ENCODE measurements at regions of chr21 and their contacts with region 1.

Region 1: GRCh38 chr21:23016405-23017016 is 2018.3 kb downstream of the NCAM2 start:
- DNase-seq: peak; percentile 62
- ATAC-seq: peak; percentile 69
- H3K4me3 ChIP-seq: no peak overlapping the region
- H3K27ac ChIP-seq: peak overlapping the region; percentile 89
- H3K4me1 ChIP-seq: peaks cover 21% of the 10 kb centered on the region
- H3K27me3 ChIP-seq: no peaks in the 10 kb centered on the region
- CTCF ChIP-seq: peak; percentile 79

Region 2: DNA sequence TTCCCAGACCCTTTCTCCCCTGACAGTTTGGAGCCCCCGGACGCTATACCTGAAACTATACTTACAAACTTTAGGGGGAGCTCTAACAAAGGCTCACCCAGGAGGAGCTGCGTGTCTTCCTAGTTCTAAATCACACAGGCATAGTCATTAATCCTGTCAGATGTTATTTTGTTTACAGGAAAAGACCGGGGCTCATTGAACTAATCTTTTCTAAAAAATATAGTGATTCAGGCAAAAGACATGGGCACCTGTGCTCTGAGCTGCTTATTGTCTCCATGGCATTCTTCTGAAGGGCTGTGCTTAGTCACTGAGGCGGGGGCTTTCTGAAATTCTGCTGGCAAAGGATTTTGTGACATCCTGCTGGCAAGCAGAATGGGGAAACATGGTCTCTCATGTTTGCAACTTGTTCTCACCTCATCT is 441.3 kb before region 1 on chr21:
- CTCF ChIA-PET with region 1: interaction called, 4 read pairs
- POLR2A ChIA-PET with region 1: no interaction called
- intact Hi-C with region 1: loop called (anchors 10 kb)
- DNase-seq: peak; percentile 47
- ATAC-seq: peak; percentile 85
- H3K4me3 ChIP-seq: peak overlapping the region; percentile 43
- H3K27ac ChIP-seq: no peak overlapping the region
- H3K4me1 ChIP-seq: no peaks in the 10 kb centered on the region
- H3K27me3 ChIP-seq: no peaks in the 10 kb centered on the region
- CTCF ChIP-seq: peak; percentile 75

Region 3: DNA sequence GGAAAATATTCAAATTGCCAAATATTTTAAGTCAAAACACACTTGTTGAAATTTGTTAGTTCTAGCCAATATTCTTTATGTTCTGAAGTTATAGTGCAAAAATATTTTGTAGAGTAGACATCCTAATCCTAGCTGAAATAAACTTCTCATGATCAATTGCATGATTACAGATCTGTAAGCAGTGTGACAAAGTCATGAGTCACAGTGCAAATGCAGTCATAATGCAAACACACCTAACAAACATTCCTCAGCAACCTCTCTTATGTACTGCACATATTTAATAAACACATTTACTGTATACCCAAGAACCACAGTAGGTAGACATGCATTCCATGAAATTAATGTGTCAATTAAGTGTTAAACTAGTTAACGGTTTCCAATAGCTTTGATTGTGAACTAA is 160.9 kb before region 1 on chr21:
- CTCF ChIA-PET with region 1: no interaction called
- POLR2A ChIA-PET with region 1: no interaction called
- intact Hi-C with region 1: loop called (anchors 5 kb)
- DNase-seq: peak; percentile 92
- ATAC-seq: peak; percentile 100
- H3K4me3 ChIP-seq: no peak overlapping the region
- H3K27ac ChIP-seq: peak overlapping the region; percentile 36
- H3K4me1 ChIP-seq: peaks cover 14% of the 10 kb centered on the region
- H3K27me3 ChIP-seq: no peaks in the 10 kb centered on the region
- CTCF ChIP-seq: no peak

Region 4: GRCh38 chr21:22925032-22925431 is 91.5 kb before region 1 on chr21:
- CTCF ChIA-PET with region 1: no interaction called
- POLR2A ChIA-PET with region 1: no interaction called
- intact Hi-C with region 1: no loop called
- DNase-seq: no peak
- ATAC-seq: 0 out of 2 replicates have a peak, but pooled peaks have one; percentile 22
- H3K4me3 ChIP-seq: no peak overlapping the region
- H3K27ac ChIP-seq: no peak overlapping the region
- H3K4me1 ChIP-seq: no peaks in the 10 kb centered on the region
- H3K27me3 ChIP-seq: no peaks in the 10 kb centered on the region
- CTCF ChIP-seq: no peak

Region 5: GRCh38 chr21:22941791-22942190 is 74.7 kb before region 1 on chr21:
- CTCF ChIA-PET with region 1: no interaction called
- POLR2A ChIA-PET with region 1: no interaction called
- intact Hi-C with region 1: loop called (anchors 5 kb)
- DNase-seq: peak; percentile 65
- ATAC-seq: peak; percentile 94
- H3K4me3 ChIP-seq: peak overlapping the region; percentile 18; the same call in 1 of the 2 replicates
- H3K27ac ChIP-seq: peak overlapping the region; percentile 44
- H3K4me1 ChIP-seq: peaks cover 20% of the 10 kb centered on the region
- H3K27me3 ChIP-seq: no peaks in the 10 kb centered on the region
- CTCF ChIP-seq: no peak

Region 6: DNA sequence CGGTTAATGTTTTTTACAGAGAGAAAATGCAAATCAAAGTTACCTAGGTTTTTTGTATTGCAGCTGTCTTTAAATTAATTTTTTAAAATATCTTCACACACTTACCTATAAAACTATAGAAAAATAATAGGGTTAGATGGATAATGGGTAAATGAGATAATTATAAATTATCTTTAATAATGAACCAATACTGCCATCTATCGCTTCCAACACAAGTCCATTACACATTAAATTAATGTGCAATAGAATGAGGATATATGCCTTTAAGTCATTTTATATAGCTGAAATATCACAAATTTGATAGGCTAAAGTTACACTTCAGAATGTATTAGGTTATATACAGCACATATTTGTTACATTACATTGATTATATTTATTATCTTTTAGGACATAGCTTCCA is 377.9 kb after region 1 on chr21:
- CTCF ChIA-PET with region 1: interaction called, 6 read pairs
- POLR2A ChIA-PET with region 1: no interaction called
- intact Hi-C with region 1: loop called (anchors 5 kb)
- DNase-seq: peak; percentile 25
- ATAC-seq: peak; percentile 40
- H3K4me3 ChIP-seq: no peak overlapping the region
- H3K27ac ChIP-seq: no peak overlapping the region
- H3K4me1 ChIP-seq: no peaks in the 10 kb centered on the region
- H3K27me3 ChIP-seq: no peaks in the 10 kb centered on the region
- CTCF ChIP-seq: peak; percentile 61